ENCODE measurements at regions of chr3 and their contacts with region 1.

Region 1: DNA sequence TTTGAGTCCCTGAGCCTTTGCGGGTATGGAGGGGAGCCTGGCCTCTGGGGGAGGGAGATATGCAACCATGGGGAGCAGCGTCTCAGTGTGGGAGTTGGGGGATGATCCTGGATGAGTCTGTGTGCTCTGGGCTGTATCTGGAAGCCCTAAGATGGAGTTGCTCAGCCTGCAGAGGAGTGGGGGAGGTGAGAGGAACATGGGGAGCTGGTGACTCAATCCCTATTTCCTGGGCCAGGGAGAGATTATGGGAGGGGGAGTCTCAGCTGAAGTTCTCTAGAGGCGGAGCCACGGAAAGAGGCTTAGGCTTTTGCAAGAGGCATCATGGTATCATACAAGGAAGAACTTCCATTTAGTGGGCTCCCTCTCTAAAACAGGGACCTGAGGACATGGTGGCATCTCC is 59.5 kb upstream of the TMEM115 start:
- DNase-seq: no peak
- H3K4me3 ChIP-seq: no peak overlapping the region
- H3K27ac ChIP-seq: no peak overlapping the region
- H3K4me1 ChIP-seq: no peaks in the 10 kb centered on the region
- H3K27me3 ChIP-seq: no peaks in the 10 kb centered on the region
- CTCF ChIP-seq: no peak
- POLR2A ChIP-seq: no peak

Region 2: GRCh38 chr3:50370594-50370993 is 48.3 kb before region 1 on chr3:
- intact Hi-C with region 1: no loop called
- DNase-seq: no peak
- H3K4me3 ChIP-seq: no peak overlapping the region
- H3K27ac ChIP-seq: no peak overlapping the region
- H3K4me1 ChIP-seq: no peaks in the 10 kb centered on the region
- H3K27me3 ChIP-seq: no peaks in the 10 kb centered on the region
- CTCF ChIP-seq: no peak
- POLR2A ChIP-seq: no peak

Region 3: DNA sequence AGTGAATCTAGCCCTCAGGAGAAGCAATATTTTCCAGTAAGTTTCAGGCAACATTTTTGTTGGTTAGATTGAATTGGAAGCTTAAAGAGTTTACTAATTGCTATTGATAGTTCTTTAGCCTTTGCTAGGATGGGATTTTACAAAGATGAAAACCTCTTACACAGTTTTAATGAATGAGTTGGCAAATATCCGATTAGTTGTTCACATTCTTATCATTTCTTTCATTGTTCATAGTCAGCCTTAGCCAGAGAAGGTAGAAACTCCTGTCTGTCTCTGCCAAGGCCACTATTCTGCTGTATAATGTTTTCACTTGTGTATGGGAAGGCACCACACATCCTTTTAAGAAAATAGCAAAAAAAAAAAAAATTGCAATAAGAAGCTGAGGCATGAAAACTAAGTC is 744.2 kb after region 1 on chr3:
- intact Hi-C with region 1: loop called (anchors 5 kb)
- DNase-seq: no peak
- H3K4me3 ChIP-seq: no peak overlapping the region
- H3K27ac ChIP-seq: no peak overlapping the region
- H3K4me1 ChIP-seq: no peaks in the 10 kb centered on the region
- H3K27me3 ChIP-seq: no peaks in the 10 kb centered on the region
- CTCF ChIP-seq: no peak
- POLR2A ChIP-seq: no peak